ENCODE measurements at regions of chr5 and their contacts with region 1.

Region 1: GRCh38 chr5:181159286-181159829 is 12.0 kb downstream of the OR2V2 start:
- DNase-seq: peak; percentile 82 to 90 (median 86)
- ATAC-seq: peak; percentile 97
- H3K4me3 ChIP-seq: no peak overlapping the region
- H3K27ac ChIP-seq: no peak overlapping the region
- H3K4me1 ChIP-seq: peaks cover 5% of the 10 kb centered on the region
- H3K27me3 ChIP-seq: no peaks in the 10 kb centered on the region
- CTCF ChIP-seq: peak; percentile 79 to 89 (median 87)
- POLR2A ChIP-seq: no peak

Region 2: GRCh38 chr5:180799194-180799593 is 360.2 kb before region 1 on chr5:
- intact Hi-C with region 1: loop called (anchors 10 kb)
- DNase-seq: peak; percentile 73 to 79 (median 78)
- ATAC-seq: no peak
- H3K4me3 ChIP-seq: no peak overlapping the region
- H3K27ac ChIP-seq: peak overlapping the region in 1 of 4 donors; percentile 99
- H3K4me1 ChIP-seq: peaks cover 80% of the 10 kb centered on the region
- H3K27me3 ChIP-seq: no peaks in the 10 kb centered on the region
- CTCF ChIP-seq: peak; percentile 27 to 70 (median 59)
- POLR2A ChIP-seq: no peak

Region 3: GRCh38 chr5:180860887-180861822 is 298.2 kb before region 1 on chr5 and contains the start of gene ZFP62:
- intact Hi-C with region 1: loop called (anchors 10 kb)
- DNase-seq: peak; percentile 93 to 97 (median 96)
- ATAC-seq: peak; percentile 93
- H3K4me3 ChIP-seq: peak within 1 kb of the TSS; percentile 67 to 92
- H3K27ac ChIP-seq: peak within 1 kb of the TSS; percentile 87 to 95 (median 92)
- H3K4me1 ChIP-seq: peaks cover 21% of the 10 kb centered on the region
- H3K27me3 ChIP-seq: no peaks in the 10 kb centered on the region
- CTCF ChIP-seq: peak in 3 of 7 experiments; percentile 6 to 31 (median 24)
- POLR2A ChIP-seq: peak; percentile 67 to 86 (median 85)
- total RNA-seq, gene ZFP62: 17.1 to 24.6 TPM